Pancreas (tissue), 10 donors: ENCODE measurements at regions of chr7 and their contacts with region 1.

Region 1: DNA sequence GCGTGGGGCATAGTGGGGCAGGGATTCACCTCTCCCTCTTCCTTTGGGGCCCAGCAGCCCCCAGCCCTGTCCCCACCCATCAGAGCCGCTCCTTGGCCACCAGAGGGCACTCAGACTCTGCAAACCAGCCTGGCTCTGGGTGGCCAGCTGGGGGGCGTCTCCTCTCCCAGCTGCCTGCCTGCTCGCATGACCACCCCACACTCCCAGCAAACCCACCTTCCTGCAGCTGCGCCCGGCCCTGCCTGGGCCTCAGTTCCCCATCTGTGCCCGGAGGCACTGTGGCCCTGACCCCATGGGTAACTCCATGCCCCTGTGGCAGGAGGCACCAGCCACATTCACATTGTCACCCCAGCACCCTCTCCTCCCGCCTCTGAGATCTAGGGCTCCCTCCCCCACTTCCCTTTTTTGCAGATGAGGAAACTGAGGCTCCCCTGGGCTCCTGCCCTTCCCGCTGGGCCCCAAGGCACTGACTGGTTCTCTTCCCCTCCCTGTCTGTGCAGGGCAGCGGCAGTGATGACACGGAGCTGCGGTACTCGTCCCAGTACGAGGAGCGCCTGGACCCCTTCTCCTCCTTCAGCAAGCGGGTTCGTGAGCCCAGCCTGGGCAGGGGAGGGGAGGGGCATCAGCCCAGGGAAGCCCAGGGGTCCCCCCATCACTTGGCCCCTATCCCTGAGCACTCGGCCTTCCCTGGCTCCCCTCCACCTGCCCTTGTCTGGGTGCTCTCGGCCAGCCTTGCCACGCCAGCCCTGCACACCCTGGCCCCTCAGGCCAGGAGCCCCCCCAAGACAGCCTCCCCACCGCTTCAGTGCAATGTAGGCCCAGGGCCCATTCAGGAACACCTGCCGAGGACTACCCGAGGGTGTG is 6.9 kb upstream of the SH2B2 start:
- DNase-seq: peak in 2 of 6 donors; percentile 44 to 78
- ATAC-seq: peak; percentile 69 to 90 (median 84)
- H3K4me3 ChIP-seq: no peak overlapping the region
- H3K27ac ChIP-seq: no peak overlapping the region
- H3K4me1 ChIP-seq: no peaks in the 10 kb centered on the region
- H3K27me3 ChIP-seq: no peaks in the 10 kb centered on the region
- CTCF ChIP-seq: peak; percentile 32 to 74 (median 60)

Region 2: GRCh38 chr7:101882005-101882421 is 397.8 kb before region 1 on chr7:
- intact Hi-C with region 1: no loop called
- DNase-seq: no peak
- ATAC-seq: peak in 1 of 4 donors; percentile 7
- H3K4me3 ChIP-seq: no peak overlapping the region
- H3K27ac ChIP-seq: peak overlapping the region; percentile 38 to 81 (median 74)
- H3K4me1 ChIP-seq: peaks cover 21 to 37% (median 22%) of the 10 kb centered on the region in 3 donors
- H3K27me3 ChIP-seq: no peaks in the 10 kb centered on the region
- CTCF ChIP-seq: no peak

Region 3: GRCh38 chr7:102024769-102025391 is 254.9 kb before region 1 on chr7:
- intact Hi-C with region 1: no loop called
- DNase-seq: no peak
- ATAC-seq: peak in 2 of 4 donors; percentile 17 to 29
- H3K4me3 ChIP-seq: no peak overlapping the region
- H3K27ac ChIP-seq: no peak overlapping the region
- H3K4me1 ChIP-seq: no peaks in the 10 kb centered on the region
- H3K27me3 ChIP-seq: no peaks in the 10 kb centered on the region
- CTCF ChIP-seq: no peak

Region 4: DNA sequence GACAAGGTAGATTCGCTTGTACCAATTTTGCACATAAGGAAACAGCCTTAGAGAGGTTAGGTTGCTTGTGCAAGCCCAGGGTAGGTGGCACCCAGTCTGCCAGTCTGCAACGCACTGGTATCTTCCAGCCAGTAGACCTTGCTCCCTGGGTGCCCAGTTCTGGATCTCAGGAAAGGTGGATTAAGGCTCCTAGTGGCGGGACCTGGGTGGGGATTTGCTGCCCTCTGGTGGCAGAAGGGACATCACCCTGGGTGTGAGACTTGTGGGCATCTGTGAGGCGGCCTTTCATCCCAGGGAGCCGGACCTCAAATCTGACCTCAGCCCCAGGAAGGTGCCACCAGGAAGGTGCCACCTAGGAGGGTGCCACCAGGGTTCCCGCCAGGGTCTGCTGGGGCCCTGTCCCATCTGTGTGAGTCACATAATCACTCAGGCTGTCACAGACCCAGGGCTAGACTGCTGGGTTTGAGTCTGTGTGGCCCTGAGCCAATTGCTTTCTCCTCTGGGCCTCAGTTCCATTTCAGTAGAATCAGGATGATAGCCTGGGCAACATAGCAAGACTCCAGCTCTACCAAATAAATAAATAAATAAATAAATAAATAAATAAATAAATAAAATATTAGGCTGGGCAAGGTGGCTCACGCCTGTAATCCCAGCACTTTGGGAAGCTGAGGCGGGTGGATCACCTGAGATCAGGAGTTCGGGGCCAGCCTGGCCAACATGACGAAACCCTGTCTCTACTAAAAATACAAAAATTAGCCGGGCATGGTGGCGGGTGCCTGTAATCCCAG is 111.1 kb after region 1 on chr7:
- intact Hi-C with region 1: loop called in 2 of 3 experiments (anchors 5 kb)
- DNase-seq: peak; percentile 75 to 92 (median 88)
- ATAC-seq: peak; percentile 85 to 94 (median 94)
- H3K4me3 ChIP-seq: no peak overlapping the region
- H3K27ac ChIP-seq: no peak overlapping the region
- H3K4me1 ChIP-seq: no peaks in the 10 kb centered on the region
- H3K27me3 ChIP-seq: no peaks in the 10 kb centered on the region
- CTCF ChIP-seq: peak; percentile 83 to 93 (median 87)